Left ventricle myocardium inferior (tissue), 1 donor: ENCODE measurements at regions of chr11 and their contacts with region 1.

Region 1: GRCh38 chr11:18634140-18635032 is at the start of gene SPTY2D1:
- DNase-seq: peak; percentile 100
- H3K4me3 ChIP-seq: peak within 1 kb of the TSS; percentile 86
- H3K27ac ChIP-seq: peak within 1 kb of the TSS; percentile 96
- H3K4me1 ChIP-seq: peaks cover 42% of the 10 kb centered on the region
- H3K27me3 ChIP-seq: no peaks in the 10 kb centered on the region
- CTCF ChIP-seq: peak; percentile 34
- total RNA-seq, gene SPTY2D1: 8.7 TPM

Region 2: GRCh38 chr11:18588297-18589252 is 45.8 kb before region 1 on chr11 and contains the start of gene UEVLD:
- intact Hi-C with region 1: loop called (anchors 2 kb)
- DNase-seq: peak; percentile 91
- H3K4me3 ChIP-seq: peak within 1 kb of the TSS; percentile 82
- H3K27ac ChIP-seq: peak within 1 kb of the TSS; percentile 87
- H3K4me1 ChIP-seq: peaks cover 62% of the 10 kb centered on the region
- H3K27me3 ChIP-seq: no peaks in the 10 kb centered on the region
- CTCF ChIP-seq: no peak
- total RNA-seq, gene UEVLD: 17.7 TPM

Region 3: DNA sequence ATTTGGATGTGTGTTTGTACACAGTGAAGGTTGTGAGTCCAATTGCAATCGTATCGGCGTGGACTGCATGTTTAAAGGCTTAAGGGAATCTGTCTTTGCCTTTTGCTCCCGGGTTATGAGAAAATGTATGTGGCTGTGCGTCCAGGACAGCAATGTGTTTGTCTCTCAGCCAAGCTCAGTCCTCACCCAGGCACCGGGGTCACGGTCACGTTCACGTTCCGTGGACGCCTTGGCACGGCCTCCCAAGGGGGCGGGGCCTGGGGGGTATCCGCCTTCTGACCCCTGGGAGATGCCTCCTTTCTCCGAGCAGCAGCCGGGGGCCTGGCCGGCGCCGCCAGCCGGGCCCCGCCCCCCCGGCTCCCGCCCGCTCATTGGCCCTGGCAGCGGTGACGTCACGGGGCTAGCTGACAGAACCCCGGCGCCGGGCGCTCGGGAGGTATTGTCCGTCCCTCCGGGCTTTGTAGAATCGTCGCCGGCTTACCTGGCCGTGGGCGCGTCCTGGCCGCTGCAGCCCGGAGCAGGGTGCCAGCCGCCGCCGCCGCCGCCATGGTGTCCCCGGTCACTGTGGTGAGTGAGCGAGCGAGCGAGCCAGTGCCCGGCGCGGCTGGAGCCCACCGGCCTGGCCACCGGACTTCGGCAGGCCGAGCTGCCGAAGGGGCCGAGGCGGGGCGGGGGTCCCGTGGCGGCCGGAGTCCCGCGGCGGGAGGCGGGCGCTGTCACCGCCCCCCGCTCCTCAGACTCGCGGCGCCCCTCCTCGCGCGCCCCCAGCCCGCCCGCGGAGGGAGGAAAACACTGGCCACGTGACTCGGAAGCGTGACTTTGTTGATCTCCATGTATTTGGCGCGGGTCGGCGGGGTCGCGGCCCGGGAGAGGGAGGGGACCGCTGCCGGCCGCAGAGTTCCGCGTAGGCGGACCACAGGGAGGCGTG is 64.2 kb after region 1 on chr11 and contains the start of gene TMEM86A:
- intact Hi-C with region 1: loop called (anchors 10 kb)
- DNase-seq: peak; percentile 96
- H3K4me3 ChIP-seq: peak within 1 kb of the TSS; percentile 96
- H3K27ac ChIP-seq: peak within 1 kb of the TSS; percentile 93
- H3K4me1 ChIP-seq: peaks cover 57% of the 10 kb centered on the region
- H3K27me3 ChIP-seq: no peaks in the 10 kb centered on the region
- CTCF ChIP-seq: peak; percentile 17
- total RNA-seq, gene TMEM86A: 5.4 TPM

Region 4: GRCh38 chr11:18927550-18928322 is 293.4 kb after region 1 on chr11:
- intact Hi-C with region 1: no loop called
- DNase-seq: no peak
- H3K4me3 ChIP-seq: no peak overlapping the region
- H3K27ac ChIP-seq: no peak overlapping the region
- H3K4me1 ChIP-seq: no peaks in the 10 kb centered on the region
- H3K27me3 ChIP-seq: peaks cover 7% of the 10 kb centered on the region
- CTCF ChIP-seq: no peak